PC-3 (cell line): ENCODE measurements at regions of chr21 and their contacts with region 1.

Region 1: GRCh38 chr21:34603002-34603709 is 11.8 kb downstream of the RCAN1 start:
- DNase-seq: peak; percentile 68
- ATAC-seq: peak; percentile 61
- H3K4me3 ChIP-seq: no peak overlapping the region
- H3K27ac ChIP-seq: no peak overlapping the region
- H3K4me1 ChIP-seq: peaks cover 20% of the 10 kb centered on the region
- H3K27me3 ChIP-seq: no peaks in the 10 kb centered on the region
- CTCF ChIP-seq: peak; percentile 87

Region 2: DNA sequence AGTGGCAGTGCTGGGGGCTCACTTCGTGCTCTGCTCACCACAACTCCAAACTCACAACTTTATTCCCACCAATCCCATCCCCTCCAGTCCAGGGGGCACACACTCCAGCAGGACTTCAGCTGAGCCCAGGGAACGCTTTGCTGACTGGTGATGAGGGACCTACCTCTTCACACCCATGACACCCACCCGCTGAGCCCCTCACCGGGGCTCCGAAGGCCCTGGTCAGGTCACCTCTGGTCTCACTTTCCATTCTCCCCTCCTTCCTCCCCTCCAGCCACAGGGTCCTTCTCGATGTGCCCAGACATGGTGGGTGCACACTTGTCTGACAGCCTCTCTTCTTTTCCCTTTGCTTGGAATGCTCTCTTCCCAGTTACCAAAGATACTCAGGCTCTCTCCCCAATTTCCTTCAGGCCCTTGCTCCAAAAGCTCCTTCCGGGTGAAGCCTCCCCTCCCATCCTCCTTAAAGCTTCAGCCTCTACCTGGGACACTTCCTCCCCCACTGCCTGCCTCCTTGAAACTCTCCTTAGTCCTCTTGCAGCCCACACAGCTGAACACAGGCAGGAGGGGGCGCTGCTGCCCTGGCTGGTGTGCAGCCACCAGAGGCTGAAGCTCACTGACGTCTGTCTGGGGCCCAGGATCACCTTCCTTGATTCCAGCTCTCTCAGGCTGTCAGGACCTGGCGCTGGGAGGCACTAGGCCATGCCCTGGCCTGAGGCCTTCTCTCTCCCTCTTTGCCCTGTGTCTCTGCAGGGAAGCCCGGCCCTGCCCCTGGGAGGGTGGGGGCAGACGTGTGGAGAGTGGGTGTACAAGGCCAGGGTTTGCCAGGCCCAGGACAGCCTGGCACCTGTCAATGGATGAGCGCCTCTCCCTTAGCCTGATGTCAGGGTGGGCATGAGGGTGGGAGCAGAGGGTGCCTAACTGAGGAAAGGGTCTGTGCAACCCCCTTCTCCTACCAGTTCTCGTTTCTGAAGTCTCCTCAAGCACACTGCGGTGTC is 92.7 kb before region 1 on chr21:
- CTCF ChIA-PET with region 1: interaction called, 28 read pairs
- POLR2A ChIA-PET with region 1: no interaction called
- intact Hi-C with region 1: loop called (anchors 1 kb)
- DNase-seq: peak; percentile 75
- ATAC-seq: peak; percentile 95
- H3K4me3 ChIP-seq: no peak overlapping the region
- H3K27ac ChIP-seq: no peak overlapping the region
- H3K4me1 ChIP-seq: no peaks in the 10 kb centered on the region
- H3K27me3 ChIP-seq: no peaks in the 10 kb centered on the region
- CTCF ChIP-seq: peak; percentile 87

Region 3: DNA sequence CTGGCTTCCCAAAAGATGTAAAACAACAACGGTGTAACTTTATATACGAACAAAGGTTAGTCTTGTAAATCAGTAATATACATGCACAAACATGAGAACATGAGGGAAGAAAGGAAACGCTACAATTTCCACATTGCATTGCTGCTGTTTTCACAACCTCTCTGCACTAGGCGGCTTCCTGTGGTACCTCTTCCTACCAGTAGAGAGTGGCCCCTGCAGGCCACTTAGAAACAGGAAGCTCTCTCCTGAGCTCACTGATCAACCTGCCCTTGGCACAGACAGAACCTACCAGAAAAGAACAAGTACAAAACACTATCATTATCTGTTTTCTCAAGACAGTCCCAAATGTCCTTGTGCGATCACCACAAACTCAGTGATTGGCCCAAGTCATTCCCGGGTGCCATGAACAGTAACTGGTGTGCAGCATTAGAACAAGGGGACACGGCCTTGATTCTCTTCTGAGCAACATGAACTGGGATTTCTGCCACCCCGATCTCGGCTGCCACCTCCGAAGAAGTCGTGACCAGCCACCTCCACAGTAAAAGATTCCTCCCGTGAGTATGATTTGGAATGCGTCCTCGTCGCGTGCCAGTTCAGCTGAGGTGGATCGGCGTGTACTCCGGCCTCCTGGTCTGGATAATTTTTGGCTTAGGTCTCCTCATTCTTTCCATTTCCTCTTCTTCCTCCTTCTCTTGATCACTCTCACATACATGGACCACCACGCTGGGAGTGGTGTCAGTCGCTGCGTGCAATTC is 85.5 kb before region 1 on chr21:
- CTCF ChIA-PET with region 1: interaction called, 10 read pairs
- POLR2A ChIA-PET with region 1: interaction called, 8 read pairs
- intact Hi-C with region 1: no loop called
- DNase-seq: peak; percentile 25
- ATAC-seq: peak; percentile 74
- H3K4me3 ChIP-seq: no peak overlapping the region
- H3K27ac ChIP-seq: no peak overlapping the region
- H3K4me1 ChIP-seq: no peaks in the 10 kb centered on the region
- H3K27me3 ChIP-seq: no peaks in the 10 kb centered on the region
- CTCF ChIP-seq: peak; percentile 59

Region 4: DNA sequence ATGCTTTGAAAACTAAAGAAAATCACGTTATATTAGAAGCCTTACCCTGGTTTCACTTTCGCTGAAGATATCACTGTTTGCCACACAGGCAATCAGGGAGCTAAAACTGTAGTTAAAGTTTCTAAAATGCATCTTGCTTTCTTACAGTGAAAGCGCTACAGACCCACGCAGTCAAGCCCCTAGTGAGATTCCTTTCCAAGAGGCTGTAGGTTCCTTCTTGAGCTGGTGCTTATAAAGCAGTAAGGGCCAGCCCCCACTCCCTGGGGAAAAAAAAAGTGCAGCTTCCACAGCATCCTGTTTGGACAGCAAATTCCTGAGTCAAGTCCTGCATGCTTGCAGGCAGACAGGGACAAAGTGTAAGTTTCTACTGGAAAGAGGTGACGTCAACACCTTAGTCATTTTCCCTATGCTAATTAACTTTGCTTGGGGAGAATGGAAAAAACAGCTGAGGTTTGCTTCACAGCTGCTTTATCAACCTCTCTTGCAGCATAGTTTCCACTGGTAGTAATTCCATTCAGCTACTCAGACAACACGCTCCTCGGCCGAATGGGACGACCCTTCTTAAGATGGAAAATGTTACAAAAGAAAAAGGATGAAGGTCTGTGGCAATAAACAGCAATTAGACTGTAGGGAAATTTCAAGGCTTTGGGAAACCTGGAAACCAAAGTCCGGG is 76.4 kb before region 1 on chr21:
- CTCF ChIA-PET with region 1: interaction called, 7 read pairs
- POLR2A ChIA-PET with region 1: interaction called, 3 read pairs
- intact Hi-C with region 1: loop called (anchors 1 kb)
- DNase-seq: peak; percentile 97
- ATAC-seq: peak; percentile 96
- H3K4me3 ChIP-seq: peak overlapping the region; percentile 70
- H3K27ac ChIP-seq: peak overlapping the region; percentile 82
- H3K4me1 ChIP-seq: peaks cover 24% of the 10 kb centered on the region
- H3K27me3 ChIP-seq: no peaks in the 10 kb centered on the region
- CTCF ChIP-seq: no peak

Region 5: DNA sequence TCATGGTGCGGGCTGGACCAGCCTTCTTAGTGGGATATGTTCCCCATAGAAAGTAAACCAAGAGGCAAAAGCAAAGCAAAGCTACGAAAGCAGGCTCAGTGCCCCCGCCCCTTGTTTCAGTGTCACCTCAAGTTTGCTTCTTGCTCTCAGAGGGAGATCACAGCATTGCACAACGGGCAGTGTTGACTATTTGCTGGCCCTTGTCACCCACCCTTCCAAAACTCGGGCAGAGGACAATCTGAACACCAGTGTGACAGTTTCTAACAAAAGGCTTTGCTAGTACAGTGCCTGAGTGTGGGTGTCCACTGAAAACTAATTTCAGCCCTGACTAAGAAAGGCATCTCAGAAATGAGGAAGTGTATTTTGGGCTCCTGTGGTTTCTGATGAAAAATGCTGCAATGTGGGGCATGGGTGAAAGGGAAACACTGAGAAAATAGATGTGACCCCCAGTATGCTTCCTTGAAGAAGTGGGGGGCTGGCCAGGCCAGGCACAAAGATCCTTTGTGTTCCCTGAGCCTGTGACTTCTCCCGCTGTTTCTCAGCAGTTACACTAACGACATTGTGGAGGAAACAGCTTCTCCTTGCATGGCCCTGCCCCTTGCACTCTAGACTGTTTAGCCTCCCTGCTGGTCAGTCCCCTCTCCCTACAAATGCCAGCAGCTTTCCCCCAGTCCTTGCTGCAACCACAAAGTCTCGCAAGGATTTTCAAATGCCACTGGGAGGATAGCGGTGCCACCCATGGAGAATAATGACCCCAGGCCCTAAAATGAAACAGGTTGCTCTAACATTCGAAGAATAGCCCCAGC is 57.9 kb before region 1 on chr21:
- CTCF ChIA-PET with region 1: interaction called, 6 read pairs
- POLR2A ChIA-PET with region 1: interaction called, 6 read pairs
- intact Hi-C with region 1: loop called (anchors 2 kb)
- DNase-seq: peak; percentile 65
- ATAC-seq: peak; percentile 67
- H3K4me3 ChIP-seq: no peak overlapping the region
- H3K27ac ChIP-seq: peak overlapping the region; percentile 53
- H3K4me1 ChIP-seq: peaks cover 26% of the 10 kb centered on the region
- H3K27me3 ChIP-seq: no peaks in the 10 kb centered on the region
- CTCF ChIP-seq: no peak

Region 6: GRCh38 chr21:34553151-34553952 is 49.8 kb before region 1 on chr21:
- CTCF ChIA-PET with region 1: interaction called, 5 read pairs
- POLR2A ChIA-PET with region 1: no interaction called
- intact Hi-C with region 1: loop called (anchors 1 kb)
- DNase-seq: peak; percentile 90
- ATAC-seq: peak; percentile 95
- H3K4me3 ChIP-seq: peak overlapping the region; percentile 36; the same call in 1 of the 2 replicates
- H3K27ac ChIP-seq: peak overlapping the region; percentile 97
- H3K4me1 ChIP-seq: peaks cover 31% of the 10 kb centered on the region
- H3K27me3 ChIP-seq: no peaks in the 10 kb centered on the region
- CTCF ChIP-seq: no peak

Region 7: GRCh38 chr21:34630536-34631143 is 27.5 kb after region 1 on chr21:
- CTCF ChIA-PET with region 1: interaction called, 6 read pairs
- POLR2A ChIA-PET with region 1: no interaction called
- intact Hi-C with region 1: loop called (anchors 1 kb)
- DNase-seq: peak; percentile 74
- ATAC-seq: peak; percentile 80
- H3K4me3 ChIP-seq: no peak overlapping the region
- H3K27ac ChIP-seq: no peak overlapping the region
- H3K4me1 ChIP-seq: no peaks in the 10 kb centered on the region
- H3K27me3 ChIP-seq: peaks cover 6% of the 10 kb centered on the region; the same call in 1 of the 2 replicates
- CTCF ChIP-seq: peak; percentile 91